Caco-2 (cell line): ENCODE measurements at regions of chr5 and their contacts with region 1.

Region 1: DNA sequence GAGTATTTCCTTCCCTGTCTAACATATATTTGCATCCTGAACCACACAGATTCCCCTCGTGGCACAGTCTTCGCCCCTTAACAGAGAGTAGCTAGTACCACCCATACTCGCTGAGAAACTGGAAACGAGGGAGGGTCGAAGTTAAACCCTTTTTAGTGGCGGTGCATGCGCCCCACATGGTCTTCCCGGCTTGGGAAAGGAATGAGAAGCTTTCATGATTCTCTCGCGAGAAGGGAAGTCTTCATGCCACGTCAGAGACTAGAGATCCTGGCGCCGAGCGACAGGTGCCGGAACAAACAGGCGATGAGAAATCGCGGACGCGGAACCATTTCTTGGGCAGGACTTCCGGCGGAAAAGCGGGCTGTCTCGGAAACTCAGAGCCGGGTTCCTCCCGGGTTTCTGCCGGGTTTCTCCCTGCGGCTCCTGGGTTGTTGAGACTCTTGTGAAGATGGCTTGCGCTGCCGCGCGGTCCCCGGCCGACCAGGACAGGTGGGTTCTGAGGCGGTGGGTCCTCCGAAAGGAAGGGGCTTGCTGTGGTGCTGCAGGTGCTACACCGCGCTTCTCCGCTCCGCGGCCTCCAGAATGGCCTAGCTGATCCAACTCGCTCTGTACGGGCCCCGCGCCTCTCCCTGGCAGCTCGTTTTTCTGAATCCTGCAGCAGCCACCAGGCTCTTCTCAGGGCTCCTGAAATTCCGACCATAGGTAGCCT is at the start of gene SRP19:
- DNase-seq: peak; percentile 93 to 96
- H3K4me3 ChIP-seq: peak within 1 kb of the TSS; percentile 69
- H3K4me3 Mint-ChIP-seq: peak within 1 kb of the TSS; percentile 85
- H3K27ac Mint-ChIP-seq: peak within 1 kb of the TSS; percentile 95
- H3K4me1 ChIP-seq: no peaks in the 10 kb centered on the region
- H3K4me1 Mint-ChIP-seq: no peaks in the 10 kb centered on the region
- H3K27me3 ChIP-seq: no peaks in the 10 kb centered on the region
- H3K27me3 Mint-ChIP-seq: no peaks in the 10 kb centered on the region
- CTCF ChIP-seq: no peak
- total RNA-seq, gene SRP19: 63.5 and 65.1 TPM in 2 replicates

Region 2: DNA sequence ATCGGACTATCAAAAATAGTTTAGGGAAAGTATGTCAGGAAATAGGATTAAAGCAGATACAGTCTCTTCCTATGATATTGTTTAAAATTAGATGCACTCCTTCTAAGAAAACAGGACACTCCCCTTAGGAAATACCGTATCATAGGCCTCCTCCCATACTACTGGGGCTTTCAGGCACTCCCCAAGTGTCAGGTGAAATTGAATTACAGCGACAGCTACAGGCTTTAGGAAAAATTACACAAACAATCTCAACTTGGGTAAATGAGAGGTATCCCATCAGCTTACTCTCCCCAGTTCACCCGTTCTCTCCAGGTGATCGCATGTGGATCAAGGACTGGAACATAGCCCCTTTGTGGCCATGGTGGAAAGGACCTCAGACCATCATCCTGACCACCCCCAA is 331.6 kb before region 1 on chr5:
- CTCF ChIA-PET with region 1: no interaction called
- POLR2A ChIA-PET with region 1: no interaction called
- intact Hi-C with region 1: no loop called
- DNase-seq: no peak
- H3K4me3 ChIP-seq: no peak overlapping the region
- H3K4me3 Mint-ChIP-seq: no peak overlapping the region
- H3K27ac Mint-ChIP-seq: no peak overlapping the region
- H3K4me1 ChIP-seq: no peaks in the 10 kb centered on the region
- H3K4me1 Mint-ChIP-seq: no peaks in the 10 kb centered on the region
- H3K27me3 ChIP-seq: no peaks in the 10 kb centered on the region
- H3K27me3 Mint-ChIP-seq: peaks cover under 1% of the 10 kb centered on the region
- CTCF ChIP-seq: peak; percentile 18 to 34

Region 3: DNA sequence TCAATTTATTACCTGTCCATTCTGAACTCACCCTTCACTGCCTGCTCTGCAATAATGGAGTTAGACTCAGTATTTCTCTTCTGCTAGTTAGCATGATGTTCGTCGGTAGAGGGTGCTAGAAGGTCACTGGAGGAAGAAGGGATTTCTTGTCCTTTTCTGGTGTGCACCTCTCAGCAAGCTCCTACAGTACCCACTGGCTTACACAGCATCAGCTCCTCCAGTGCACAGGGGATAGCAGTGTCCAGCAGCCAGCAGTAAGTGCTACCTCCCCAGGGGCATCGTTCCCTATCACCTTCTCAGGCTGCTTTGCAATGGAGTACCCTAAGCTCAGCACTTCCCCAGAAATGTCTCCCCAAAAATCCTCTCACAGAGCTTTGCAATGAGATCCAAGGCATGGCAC is 169.3 kb before region 1 on chr5:
- CTCF ChIA-PET with region 1: interaction called, 3 read pairs
- POLR2A ChIA-PET with region 1: no interaction called
- intact Hi-C with region 1: loop called (anchors 5 kb)
- DNase-seq: peak; percentile 62 to 73
- H3K4me3 ChIP-seq: no peak overlapping the region
- H3K4me3 Mint-ChIP-seq: no peak overlapping the region
- H3K27ac Mint-ChIP-seq: no peak overlapping the region
- H3K4me1 ChIP-seq: peaks cover 4% of the 10 kb centered on the region; the same call in 1 of the 2 replicates
- H3K4me1 Mint-ChIP-seq: peaks cover 14% of the 10 kb centered on the region
- H3K27me3 ChIP-seq: no peaks in the 10 kb centered on the region
- H3K27me3 Mint-ChIP-seq: peaks cover 6% of the 10 kb centered on the region
- CTCF ChIP-seq: peak; percentile 61 to 80

Region 4: GRCh38 chr5:112707187-112708102 is 153.6 kb before region 1 on chr5:
- CTCF ChIA-PET with region 1: no interaction called
- POLR2A ChIA-PET with region 1: interaction called, 3 read pairs
- intact Hi-C with region 1: loop called (anchors 5 kb)
- DNase-seq: peak; percentile 98 to 99
- H3K4me3 ChIP-seq: peak overlapping the region; percentile 81
- H3K4me3 Mint-ChIP-seq: peak overlapping the region; percentile 99
- H3K27ac Mint-ChIP-seq: peak overlapping the region; percentile 79
- H3K4me1 ChIP-seq: peaks cover 20% of the 10 kb centered on the region
- H3K4me1 Mint-ChIP-seq: peaks cover 33% of the 10 kb centered on the region
- H3K27me3 ChIP-seq: no peaks in the 10 kb centered on the region
- H3K27me3 Mint-ChIP-seq: peaks cover 3% of the 10 kb centered on the region
- CTCF ChIP-seq: peak in 1 of 2 experiments; percentile 8

Region 5: GRCh38 chr5:112848116-112848811 is 12.8 kb before region 1 on chr5:
- CTCF ChIA-PET with region 1: interaction called, 12 read pairs
- POLR2A ChIA-PET with region 1: no interaction called
- intact Hi-C with region 1: no loop called
- DNase-seq: peak in 1 of 2 experiments; percentile 57
- H3K4me3 ChIP-seq: no peak overlapping the region
- H3K4me3 Mint-ChIP-seq: no peak overlapping the region
- H3K27ac Mint-ChIP-seq: no peak overlapping the region
- H3K4me1 ChIP-seq: no peaks in the 10 kb centered on the region
- H3K4me1 Mint-ChIP-seq: no peaks in the 10 kb centered on the region
- H3K27me3 ChIP-seq: no peaks in the 10 kb centered on the region
- H3K27me3 Mint-ChIP-seq: no peaks in the 10 kb centered on the region
- CTCF ChIP-seq: peak; percentile 47 to 74

Region 6: GRCh38 chr5:112921833-112922817 is 61.0 kb after region 1 on chr5 and contains the start of gene REEP5:
- CTCF ChIA-PET with region 1: no interaction called
- POLR2A ChIA-PET with region 1: interaction called, 5 read pairs
- intact Hi-C with region 1: loop called (anchors 1 kb)
- DNase-seq: peak; percentile 89 to 92
- H3K4me3 ChIP-seq: peak within 1 kb of the TSS; percentile 99
- H3K4me3 Mint-ChIP-seq: peak within 1 kb of the TSS; percentile 100
- H3K27ac Mint-ChIP-seq: peak within 1 kb of the TSS; percentile 99
- H3K4me1 ChIP-seq: peaks cover 10% of the 10 kb centered on the region
- H3K4me1 Mint-ChIP-seq: peaks cover 25% of the 10 kb centered on the region
- H3K27me3 ChIP-seq: no peaks in the 10 kb centered on the region
- H3K27me3 Mint-ChIP-seq: no peaks in the 10 kb centered on the region
- CTCF ChIP-seq: peak; percentile 72 to 81
- total RNA-seq, gene REEP5: 88.2 and 99.3 TPM in 2 replicates

Region 7: DNA sequence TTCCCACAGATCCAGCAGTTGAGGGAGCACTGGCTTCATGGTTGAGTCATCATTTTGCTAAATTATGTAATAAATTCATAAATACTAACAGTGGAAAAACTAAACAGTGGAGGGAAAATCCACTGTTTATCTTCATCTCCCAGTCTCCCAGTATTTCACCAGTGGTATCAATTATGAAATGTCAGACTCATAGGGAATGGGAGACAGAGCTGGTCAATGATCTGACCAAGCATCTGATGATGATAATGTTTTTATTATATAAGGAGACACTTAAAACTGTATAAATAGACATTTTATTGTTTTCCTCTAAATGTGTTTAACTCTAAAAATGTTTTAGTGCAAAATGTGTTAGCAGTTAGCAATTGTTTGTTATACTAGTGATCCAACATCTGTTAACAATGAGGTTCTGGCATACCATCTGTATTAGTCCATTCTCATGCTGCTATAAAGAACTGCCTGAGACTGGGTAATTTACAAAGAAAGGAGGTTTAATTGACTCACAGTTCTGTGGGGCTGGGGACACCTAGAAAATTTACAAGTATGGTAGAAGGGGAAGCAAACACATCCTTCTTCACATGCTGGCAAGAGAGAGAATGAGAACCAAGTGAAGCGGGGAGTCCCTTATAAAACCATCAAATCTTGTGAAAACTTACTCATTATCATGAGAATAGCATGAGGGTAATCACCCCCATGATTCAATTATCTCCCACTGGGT is 72.7 kb after region 1 on chr5:
- CTCF ChIA-PET with region 1: no interaction called
- POLR2A ChIA-PET with region 1: no interaction called
- intact Hi-C with region 1: no loop called
- DNase-seq: no peak
- H3K4me3 ChIP-seq: no peak overlapping the region
- H3K4me3 Mint-ChIP-seq: no peak overlapping the region
- H3K27ac Mint-ChIP-seq: no peak overlapping the region
- H3K4me1 ChIP-seq: 0 out of 2 replicates have a peak, but pooled peaks cover 4% of the 10 kb centered on the region
- H3K4me1 Mint-ChIP-seq: no peaks in the 10 kb centered on the region
- H3K27me3 ChIP-seq: no peaks in the 10 kb centered on the region
- H3K27me3 Mint-ChIP-seq: no peaks in the 10 kb centered on the region
- CTCF ChIP-seq: no peak

Region 8: GRCh38 chr5:112968411-112969106 is 107.5 kb after region 1 on chr5:
- CTCF ChIA-PET with region 1: no interaction called
- POLR2A ChIA-PET with region 1: interaction called, 5 read pairs
- intact Hi-C with region 1: loop called (anchors 5 kb)
- DNase-seq: peak; percentile 58 to 77
- H3K4me3 ChIP-seq: no peak overlapping the region
- H3K4me3 Mint-ChIP-seq: peak overlapping the region; percentile 65
- H3K27ac Mint-ChIP-seq: peak overlapping the region; percentile 94
- H3K4me1 ChIP-seq: peaks cover 56% of the 10 kb centered on the region
- H3K4me1 Mint-ChIP-seq: peaks cover 35% of the 10 kb centered on the region
- H3K27me3 ChIP-seq: no peaks in the 10 kb centered on the region
- H3K27me3 Mint-ChIP-seq: no peaks in the 10 kb centered on the region
- CTCF ChIP-seq: no peak